ENCODE measurements at regions of chr1 and their contacts with region 1.

Region 1: DNA sequence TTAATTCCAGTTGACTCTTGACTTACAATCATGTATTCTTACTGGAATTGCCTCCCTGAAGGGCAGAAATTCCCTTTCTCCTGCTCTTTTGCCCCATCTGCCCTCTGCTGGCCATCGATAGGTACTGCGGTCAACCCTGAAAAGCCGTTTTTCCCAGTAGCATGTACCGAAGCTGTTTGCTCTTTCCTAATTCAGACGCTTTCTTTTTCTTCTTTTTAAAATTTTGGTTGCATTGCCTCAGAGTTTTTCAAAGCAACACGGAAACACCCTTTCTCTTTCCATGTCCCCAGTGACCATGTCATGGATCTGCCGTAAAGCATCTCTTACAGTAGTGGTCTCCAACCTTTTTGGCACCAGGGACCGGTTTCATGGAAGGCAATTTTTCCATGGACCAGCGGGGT is 164.2 kb upstream of the C1orf21 start:
- DNase-seq: no peak
- H3K4me3 ChIP-seq: no peak overlapping the region
- CTCF ChIP-seq: peak; percentile 78

Region 2: DNA sequence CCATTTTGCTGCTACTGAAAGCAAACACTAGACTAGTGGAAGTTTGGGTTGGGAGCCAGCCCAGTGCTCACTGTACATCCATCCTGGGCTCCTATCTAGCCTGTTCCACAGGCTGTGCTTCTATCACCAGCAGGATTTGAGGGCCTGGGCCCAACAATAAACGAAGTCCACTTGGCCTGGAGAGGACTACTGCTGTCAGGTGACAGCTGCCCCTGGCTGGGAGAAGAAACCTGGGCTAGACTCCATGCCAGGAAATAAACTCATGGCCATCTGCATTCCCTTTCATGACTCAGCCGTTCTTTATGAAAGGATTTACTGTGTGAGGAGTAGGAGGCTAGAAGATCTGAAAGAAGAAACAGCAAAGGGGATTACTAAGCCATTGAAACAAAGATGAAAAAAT is 220.6 kb before region 1 on chr1:
- CTCF ChIA-PET with region 1: no interaction called
- POLR2A ChIA-PET with region 1: no interaction called
- DNase-seq: peak; percentile 70
- H3K4me3 ChIP-seq: no peak overlapping the region
- CTCF ChIP-seq: no peak

Region 3: DNA sequence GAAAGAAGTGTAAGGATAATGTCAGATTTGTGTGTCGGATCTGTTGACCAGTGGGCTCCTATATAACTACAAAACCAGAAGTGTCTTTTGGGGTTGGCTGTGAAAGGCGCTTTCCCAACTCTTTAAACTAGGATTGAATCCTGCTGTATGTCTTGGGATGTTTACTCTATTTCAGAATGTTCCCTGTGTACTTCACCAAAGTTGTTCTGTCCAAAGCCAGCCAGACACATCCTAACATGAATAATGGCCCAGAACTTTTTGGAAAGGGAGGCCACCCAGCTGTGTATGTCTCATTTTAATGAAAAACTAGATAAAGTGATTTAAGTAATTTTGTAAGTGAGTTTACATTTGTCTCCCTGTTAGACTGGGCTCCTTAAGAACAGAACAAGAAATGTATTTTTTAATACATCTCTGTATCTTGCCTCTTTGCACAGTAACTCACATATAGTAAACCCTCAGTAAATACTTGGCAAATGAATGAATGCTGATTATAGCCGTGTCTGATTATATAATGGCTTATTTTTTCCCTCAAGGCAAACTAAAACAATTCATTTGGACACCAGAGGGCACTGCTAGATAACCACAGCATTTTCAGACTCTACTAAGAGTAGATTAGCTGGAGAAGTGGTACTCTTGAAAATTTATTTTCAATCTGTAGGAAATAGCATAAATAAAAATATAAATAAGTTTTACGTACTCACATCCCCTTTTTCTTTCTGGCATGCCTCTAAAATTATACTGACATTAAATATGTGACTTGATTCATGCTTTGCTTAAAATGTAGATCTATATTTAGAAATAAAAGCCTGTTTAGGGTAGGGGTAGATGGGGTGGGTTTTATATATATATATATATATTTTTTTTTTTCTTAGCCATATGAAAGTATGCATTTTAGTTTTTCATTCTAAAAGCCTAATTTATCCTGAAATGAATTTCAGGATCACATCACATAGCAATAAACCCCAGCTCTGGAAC is 147.3 kb before region 1 on chr1:
- CTCF ChIA-PET with region 1: interaction called, 64 read pairs
- POLR2A ChIA-PET with region 1: no interaction called
- DNase-seq: no peak
- H3K4me3 ChIP-seq: no peak overlapping the region
- CTCF ChIP-seq: peak; percentile 45

Region 4: DNA sequence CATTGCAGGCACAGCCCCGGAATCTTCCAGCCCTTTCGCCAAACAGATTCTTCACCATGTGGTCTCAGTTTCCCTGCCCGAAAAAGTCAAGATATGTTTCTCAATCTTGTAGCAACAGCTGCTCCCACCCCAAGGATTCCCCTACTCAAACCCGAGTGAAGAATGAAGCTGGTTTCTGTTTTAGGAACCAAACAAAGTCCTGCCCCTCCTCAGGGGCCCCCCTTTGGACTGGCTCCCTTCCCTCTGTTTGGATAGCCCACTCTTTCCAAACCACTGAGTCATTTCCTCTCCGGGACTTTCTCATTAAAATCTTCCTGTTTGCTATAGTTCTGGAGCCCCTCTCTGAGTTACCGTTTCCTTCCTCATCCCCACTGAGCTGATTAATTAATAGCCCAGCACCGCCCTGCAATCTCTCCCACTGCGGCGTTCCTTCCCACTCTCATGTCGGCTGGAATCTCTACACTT is 70.2 kb before region 1 on chr1:
- CTCF ChIA-PET with region 1: interaction called, 13 read pairs
- POLR2A ChIA-PET with region 1: no interaction called
- DNase-seq: no peak
- H3K4me3 ChIP-seq: peak overlapping the region; percentile 39
- CTCF ChIP-seq: no peak

Region 5: DNA sequence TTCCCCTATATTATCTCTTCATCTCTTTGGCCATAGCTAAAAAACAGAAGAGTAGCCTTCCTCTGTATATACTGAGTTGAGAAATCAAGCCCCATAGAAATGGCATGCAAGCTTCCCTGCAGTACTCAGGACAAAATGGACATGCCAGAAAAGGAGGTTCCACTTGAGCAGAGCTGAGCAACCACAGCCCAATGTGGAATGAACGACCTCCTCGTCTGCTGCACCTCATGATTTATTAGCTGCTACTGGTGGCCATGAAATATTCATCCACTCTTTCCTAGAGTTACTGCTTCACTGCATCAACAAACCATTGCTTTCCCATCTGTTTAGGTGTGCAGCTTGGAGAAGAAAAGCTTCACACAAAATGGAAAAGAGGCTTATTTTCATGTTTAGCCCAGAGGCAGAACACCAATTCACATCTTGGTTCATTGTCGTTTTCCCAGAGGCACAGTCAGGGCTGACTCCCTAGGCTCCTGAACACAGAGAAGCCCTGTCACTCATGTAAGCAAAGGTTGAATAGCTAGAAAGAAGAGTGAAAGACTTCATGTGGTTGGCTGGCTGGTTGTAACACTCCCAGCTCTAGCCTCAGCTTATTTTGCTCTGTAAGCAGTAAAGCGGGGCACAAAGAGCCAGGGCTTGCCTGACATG is 23.1 kb before region 1 on chr1:
- CTCF ChIA-PET with region 1: interaction called, 10 read pairs
- POLR2A ChIA-PET with region 1: interaction called, 3 read pairs
- DNase-seq: no peak
- H3K4me3 ChIP-seq: no peak overlapping the region
- CTCF ChIP-seq: no peak

Region 6: GRCh38 chr1:184242507-184242943 is 19.9 kb after region 1 on chr1:
- CTCF ChIA-PET with region 1: interaction called, 17 read pairs
- POLR2A ChIA-PET with region 1: no interaction called
- DNase-seq: peak; percentile 29
- H3K4me3 ChIP-seq: no peak overlapping the region
- CTCF ChIP-seq: no peak